Activated CD8-positive, alpha-beta memory T cell treated with anti-CD3 and anti-CD28 coated beads, Interleukin-2, amount 10 ng/mL, durations not matched to agents 7 days and 5 days (primary cell): ENCODE measurements at regions of chr12 and their contacts with region 1.

Region 1: DNA sequence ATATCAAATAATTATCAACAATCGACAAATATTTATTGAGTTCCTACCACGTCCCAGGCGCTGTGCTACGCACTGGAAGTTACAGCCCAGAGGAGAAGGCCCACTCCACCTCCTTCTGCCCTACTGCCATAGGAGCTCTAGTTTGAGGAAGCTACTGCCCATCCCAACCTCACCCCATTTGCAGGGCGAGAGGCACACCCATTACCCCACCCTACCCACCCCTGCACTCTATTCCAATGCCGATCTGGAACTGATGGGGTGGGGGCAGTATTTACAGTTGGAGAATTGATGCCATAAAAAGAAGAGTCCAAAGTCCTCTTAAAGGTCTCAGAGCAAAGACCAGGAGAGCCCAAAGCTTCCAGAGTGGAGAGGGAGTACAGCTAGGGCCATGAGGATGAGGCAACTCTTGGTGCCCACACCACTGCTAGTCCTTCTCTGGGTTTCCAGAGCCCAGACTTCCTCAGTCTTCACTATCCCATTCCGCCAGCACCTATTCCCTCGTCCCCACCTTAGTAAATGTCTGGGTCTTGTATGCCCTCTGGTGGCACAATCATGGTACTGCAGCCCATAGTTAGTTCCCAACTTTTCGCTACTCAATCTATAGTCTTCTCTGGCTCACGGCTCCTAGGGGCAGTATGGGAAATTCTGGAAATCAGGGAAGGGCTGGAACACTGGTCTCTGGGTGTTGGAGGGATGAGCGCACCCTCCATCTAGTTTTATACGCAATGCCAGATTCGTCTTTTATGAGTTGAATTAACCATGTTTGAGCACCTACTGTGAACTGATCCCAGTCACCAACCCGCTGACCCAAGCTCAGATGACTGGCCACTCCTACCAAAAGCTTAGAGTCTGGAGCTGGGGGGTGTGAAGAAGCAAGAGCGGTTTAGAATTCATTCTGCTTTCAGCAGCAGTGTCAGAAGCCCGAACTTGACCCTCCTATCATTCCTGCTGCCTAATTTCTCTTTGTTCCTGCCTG is 6.9 kb upstream of the ADCY6 start:
- DNase-seq: peak; percentile 73
- ATAC-seq: peak; percentile 70
- H3K4me3 Mint-ChIP-seq: no peak overlapping the region
- H3K27ac Mint-ChIP-seq: no peak overlapping the region
- H3K4me1 Mint-ChIP-seq: peaks cover 16% of the 10 kb centered on the region
- H3K27me3 Mint-ChIP-seq: peaks cover 15% of the 10 kb centered on the region

Region 2: DNA sequence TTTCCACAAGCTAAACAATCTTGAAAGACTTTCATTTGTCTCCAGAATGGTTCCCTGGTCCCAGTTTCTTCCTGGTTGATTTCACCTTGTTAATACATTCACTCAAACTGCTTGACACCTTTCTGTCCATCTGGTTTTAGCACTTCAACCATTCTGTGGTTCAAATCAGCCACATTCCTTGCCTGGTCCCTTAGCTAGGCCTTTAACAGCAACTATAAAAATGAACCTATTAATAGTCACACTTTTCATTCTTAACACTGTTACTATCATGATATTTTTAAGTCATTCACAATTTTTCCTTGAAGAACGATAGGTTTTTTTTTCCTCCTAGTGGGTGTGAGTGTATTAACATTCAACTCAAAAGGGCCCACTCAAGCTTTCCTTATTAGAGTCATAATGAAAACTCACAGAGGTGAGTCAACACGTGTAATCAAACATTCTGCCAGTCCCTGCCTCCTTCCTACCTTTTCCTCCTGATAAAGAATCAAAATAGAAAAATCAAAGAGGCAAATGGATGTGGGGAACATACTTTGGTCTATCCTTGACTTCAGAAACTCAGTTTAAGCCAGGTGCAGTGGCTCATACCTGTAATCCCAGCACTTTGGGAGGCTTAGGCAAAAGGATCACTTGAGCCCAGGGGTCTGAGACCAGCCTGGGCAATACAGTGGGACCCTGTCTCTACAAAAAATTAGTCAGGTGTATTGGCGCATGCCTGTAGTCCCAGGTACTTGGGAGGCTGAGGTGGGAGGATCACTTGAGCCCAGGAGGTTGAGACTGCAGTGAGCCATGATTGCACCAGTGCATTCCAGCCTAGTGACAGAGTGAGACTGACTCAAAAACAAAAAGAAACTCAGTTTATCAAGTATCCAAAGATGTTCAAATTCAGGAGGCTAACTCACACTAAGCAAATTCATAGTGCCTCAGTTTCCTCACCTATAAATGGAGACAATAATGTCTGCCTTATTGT is 44.7 kb before region 1 on chr12:
- CTCF ChIA-PET with region 1: interaction called, 286 read pairs
- DNase-seq: no peak
- ATAC-seq: peak; percentile 67
- H3K4me3 Mint-ChIP-seq: no peak overlapping the region
- H3K27ac Mint-ChIP-seq: peak overlapping the region; percentile 6
- H3K4me1 Mint-ChIP-seq: peaks cover 12% of the 10 kb centered on the region
- H3K27me3 Mint-ChIP-seq: peaks cover 11% of the 10 kb centered on the region

Region 3: GRCh38 chr12:48758221-48758620 is 37.5 kb before region 1 on chr12:
- CTCF ChIA-PET with region 1: interaction called, 286 read pairs
- DNase-seq: no peak
- ATAC-seq: no peak
- H3K4me3 Mint-ChIP-seq: no peak overlapping the region
- H3K27ac Mint-ChIP-seq: no peak overlapping the region
- H3K4me1 Mint-ChIP-seq: no peaks in the 10 kb centered on the region
- H3K27me3 Mint-ChIP-seq: peaks cover 6% of the 10 kb centered on the region

Region 4: DNA sequence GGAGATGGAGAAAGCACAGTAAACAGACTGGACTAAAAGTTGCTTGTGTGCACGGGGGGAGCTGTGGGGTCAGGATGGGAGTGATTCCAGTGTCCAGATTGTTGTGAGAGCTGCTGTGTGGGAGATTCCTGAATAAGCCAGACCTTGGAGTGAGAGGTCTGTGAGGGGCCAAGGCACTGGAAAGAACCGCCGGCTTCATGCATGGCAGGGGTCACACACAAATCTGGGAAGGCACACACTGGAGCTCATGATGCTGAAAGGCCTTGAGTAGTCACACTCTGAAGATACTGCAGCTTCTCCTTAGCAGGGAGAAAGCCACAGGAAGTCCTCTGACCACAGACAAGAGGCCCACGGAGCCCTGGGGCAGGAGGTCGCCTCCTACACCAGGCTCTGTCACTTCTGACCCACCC is 30.0 kb before region 1 on chr12:
- CTCF ChIA-PET with region 1: interaction called, 34 read pairs
- DNase-seq: peak; percentile 85
- ATAC-seq: peak; percentile 90
- H3K4me3 Mint-ChIP-seq: peak overlapping the region; percentile 35
- H3K27ac Mint-ChIP-seq: peak overlapping the region; percentile 59
- H3K4me1 Mint-ChIP-seq: peaks cover 26% of the 10 kb centered on the region
- H3K27me3 Mint-ChIP-seq: peaks cover 4% of the 10 kb centered on the region

Region 5: DNA sequence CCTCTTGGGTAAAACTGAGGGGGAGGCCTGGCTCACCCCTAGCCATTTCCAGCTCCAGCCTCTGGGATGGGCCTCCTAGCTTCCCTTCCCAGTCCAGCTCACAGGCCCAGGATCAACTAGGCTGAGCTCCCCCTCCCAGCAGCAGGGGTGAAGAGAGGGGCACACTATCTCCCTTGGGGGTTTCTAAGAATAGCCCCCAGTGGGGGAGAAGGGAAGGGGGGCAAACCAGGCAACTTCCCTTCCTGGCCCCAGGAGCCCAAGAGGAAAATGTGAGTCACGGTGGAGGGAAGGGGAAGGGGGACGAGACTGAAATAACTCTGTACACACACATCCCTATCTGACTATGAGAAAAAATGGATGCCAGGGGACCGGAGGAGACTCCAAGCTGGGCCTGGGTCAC is 15.9 kb before region 1 on chr12:
- CTCF ChIA-PET with region 1: interaction called, 15 read pairs
- DNase-seq: no peak
- ATAC-seq: no peak
- H3K4me3 Mint-ChIP-seq: no peak overlapping the region
- H3K27ac Mint-ChIP-seq: no peak overlapping the region
- H3K4me1 Mint-ChIP-seq: no peaks in the 10 kb centered on the region
- H3K27me3 Mint-ChIP-seq: peaks cover 4% of the 10 kb centered on the region